Thyroid gland (tissue), 4 donors: ENCODE measurements at regions of chr4 and their contacts with region 1.

Region 1: DNA sequence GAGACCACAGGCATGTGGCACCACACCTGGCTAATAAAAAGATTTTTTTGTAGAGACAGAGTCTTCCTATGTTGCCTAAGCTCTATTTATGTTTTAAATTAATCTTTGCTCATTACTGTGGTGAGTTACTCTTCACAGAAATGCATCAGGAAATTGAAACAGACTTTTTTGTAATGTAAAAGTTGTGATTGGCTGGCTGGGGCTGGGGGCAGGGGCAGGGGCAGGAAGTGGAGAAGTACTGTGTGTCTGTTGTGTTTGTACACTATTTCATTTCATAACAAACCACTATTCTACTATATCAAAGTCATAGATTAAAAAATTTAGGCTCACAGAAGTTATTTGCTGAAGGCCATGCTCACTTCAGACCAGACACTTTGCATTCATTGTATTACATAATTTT is 19.1 kb upstream of the ABRAXAS1 start:
- DNase-seq: no peak
- H3K4me3 ChIP-seq: no peak overlapping the region
- H3K27ac ChIP-seq: peak overlapping the region in 2 of 3 donors; percentile 22 to 26
- H3K4me1 ChIP-seq: peaks cover 0 to 8% of the 10 kb centered on the region in 2 donors
- H3K27me3 ChIP-seq: no peaks in the 10 kb centered on the region
- CTCF ChIP-seq: no peak
- POLR2A ChIP-seq: no peak

Region 2: GRCh38 chr4:83440899-83441298 is 63.1 kb before region 1 on chr4:
- intact Hi-C with region 1: no loop called
- DNase-seq: no peak
- H3K4me3 ChIP-seq: no peak overlapping the region
- H3K27ac ChIP-seq: no peak overlapping the region
- H3K4me1 ChIP-seq: no peaks in the 10 kb centered on the region
- H3K27me3 ChIP-seq: no peaks in the 10 kb centered on the region
- CTCF ChIP-seq: no peak
- POLR2A ChIP-seq: no peak

Region 3: DNA sequence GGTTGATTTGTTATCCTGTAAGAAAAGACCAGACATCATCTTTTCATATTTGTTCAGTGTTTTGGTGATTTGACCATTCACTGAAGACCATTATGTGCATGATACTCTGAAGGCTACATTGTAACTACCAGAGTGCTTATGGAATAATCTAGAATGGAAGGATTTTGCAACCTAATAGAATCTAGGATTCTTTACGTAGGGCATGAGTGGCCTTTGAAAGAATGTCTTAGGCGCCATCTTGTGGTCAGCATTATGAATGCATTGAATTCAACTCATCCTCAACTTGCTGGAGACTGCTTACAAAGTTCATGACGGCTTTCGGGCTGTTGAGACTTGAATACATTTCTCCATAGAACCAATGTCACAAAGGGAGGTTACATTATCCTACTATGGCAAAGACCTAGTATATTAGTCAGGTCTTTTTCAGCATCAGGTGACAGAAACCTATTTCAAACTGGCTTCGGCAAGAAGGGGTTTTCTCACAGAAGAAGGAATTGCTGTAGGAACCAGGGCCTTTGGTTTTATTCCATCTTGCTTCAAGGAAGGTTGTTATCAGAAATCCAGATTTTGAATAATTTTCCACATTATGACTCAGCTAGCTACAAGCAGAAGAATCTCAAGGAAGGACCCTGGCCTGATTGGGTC is 136.0 kb after region 1 on chr4:
- intact Hi-C with region 1: loop called (anchors 5 kb)
- DNase-seq: peak; percentile 49 to 51
- H3K4me3 ChIP-seq: no peak overlapping the region
- H3K27ac ChIP-seq: peak overlapping the region in 1 of 3 donors; percentile 33
- H3K4me1 ChIP-seq: peaks cover 3 to 14% of the 10 kb centered on the region in 2 donors
- H3K27me3 ChIP-seq: no peaks in the 10 kb centered on the region
- CTCF ChIP-seq: peak; percentile 27 to 97 (median 87)
- POLR2A ChIP-seq: no peak